CD8-positive, alpha-beta T cell (primary cell): ENCODE measurements at regions of chr10 and their contacts with region 1.

Region 1: DNA sequence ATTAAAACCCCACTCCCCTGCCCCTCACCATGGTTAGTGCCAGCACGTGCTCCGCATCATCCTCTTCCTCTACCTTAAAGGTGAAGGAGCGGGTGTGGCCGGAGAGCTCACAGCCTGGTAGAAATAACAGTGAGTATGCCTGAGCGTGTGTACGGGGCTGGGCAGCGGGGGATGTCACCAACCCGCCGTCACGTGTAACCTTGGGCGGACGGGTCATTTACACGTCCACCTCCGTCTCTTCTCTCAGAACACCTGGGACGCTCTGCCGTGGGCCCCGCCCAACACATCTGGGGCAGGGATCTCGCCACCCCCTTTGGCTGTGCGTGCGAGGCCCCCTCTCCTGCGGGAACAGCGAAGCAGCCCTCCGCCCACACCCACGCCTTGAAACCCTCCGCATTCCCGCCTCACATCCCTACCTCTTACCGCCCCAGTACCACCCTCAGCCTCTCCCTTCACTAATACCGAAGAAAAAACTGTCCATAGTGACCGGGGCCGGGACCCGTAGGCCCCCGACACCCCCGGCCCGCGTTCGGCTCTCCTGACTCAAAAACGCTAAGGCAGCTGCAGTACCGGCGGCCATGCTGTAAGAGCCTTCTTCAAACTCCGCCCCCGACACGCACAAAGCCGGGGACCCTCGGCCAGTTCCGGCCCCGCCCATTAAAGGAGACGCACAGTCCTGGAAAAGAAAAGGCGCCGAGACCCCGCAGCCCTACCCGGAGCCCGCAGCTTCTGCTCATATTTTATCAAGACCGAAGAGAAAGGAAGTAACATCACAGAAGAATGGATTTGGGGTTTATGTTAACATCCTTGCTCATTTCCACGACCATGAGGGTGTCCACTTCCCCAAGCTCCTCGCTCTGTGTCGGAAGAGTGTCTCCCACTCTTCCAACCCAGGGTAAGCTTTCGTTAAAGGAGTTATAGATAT is at the start of gene NPM3:
- DNase-seq: peak; percentile 54 to 88 (median 83)
- ATAC-seq: peak; percentile 80
- H3K4me3 ChIP-seq: peak within 1 kb of the TSS; percentile 81 to 87
- H3K4me3 Mint-ChIP-seq: peak within 1 kb of the TSS; percentile 100
- H3K27ac ChIP-seq: peak within 1 kb of the TSS; percentile 64 to 81
- H3K27ac Mint-ChIP-seq: peak within 1 kb of the TSS; percentile 97
- H3K4me1 ChIP-seq: peaks cover 53% of the 10 kb centered on the region
- H3K4me1 Mint-ChIP-seq: peaks cover 71% of the 10 kb centered on the region
- H3K27me3 ChIP-seq: peaks cover 13 to 20% of the 10 kb centered on the region in 2 experiments
- H3K27me3 Mint-ChIP-seq: peaks cover 6% of the 10 kb centered on the region
- CTCF ChIP-seq: no peak
- total RNA-seq, gene NPM3: 21.1 to 25.1 TPM

Region 2: GRCh38 chr10:101536800-101537199 is 246.3 kb before region 1 on chr10:
- CTCF ChIA-PET with region 1: no interaction called
- POLR2A ChIA-PET with region 1: no interaction called
- intact Hi-C with region 1: loop called in 1 of 2 experiments (anchors 5 kb)
- DNase-seq: peak in 2 of 9 experiments; percentile 44 to 54
- ATAC-seq: peak; percentile 34
- H3K4me3 ChIP-seq: no peak overlapping the region
- H3K4me3 Mint-ChIP-seq: no peak overlapping the region
- H3K27ac ChIP-seq: no peak overlapping the region
- H3K27ac Mint-ChIP-seq: no peak overlapping the region
- H3K4me1 ChIP-seq: no peaks in the 10 kb centered on the region
- H3K4me1 Mint-ChIP-seq: no peaks in the 10 kb centered on the region
- H3K27me3 ChIP-seq: no peaks in the 10 kb centered on the region
- H3K27me3 Mint-ChIP-seq: no peaks in the 10 kb centered on the region
- CTCF ChIP-seq: peak; percentile 43

Region 3: GRCh38 chr10:101693978-101694673 is 88.9 kb before region 1 on chr10:
- CTCF ChIA-PET with region 1: interaction called, 3 read pairs
- POLR2A ChIA-PET with region 1: interaction called, 3 read pairs
- intact Hi-C with region 1: loop called (anchors 5 kb)
- DNase-seq: peak; percentile 42 to 83 (median 70)
- ATAC-seq: peak; percentile 66
- H3K4me3 ChIP-seq: peak overlapping the region; percentile 85 to 88
- H3K4me3 Mint-ChIP-seq: peak overlapping the region; percentile 97
- H3K27ac ChIP-seq: peak overlapping the region; percentile 97 to 99
- H3K27ac Mint-ChIP-seq: peak overlapping the region; percentile 99
- H3K4me1 ChIP-seq: peaks cover 36% of the 10 kb centered on the region
- H3K4me1 Mint-ChIP-seq: peaks cover 48% of the 10 kb centered on the region
- H3K27me3 ChIP-seq: no peaks in the 10 kb centered on the region
- H3K27me3 Mint-ChIP-seq: no peaks in the 10 kb centered on the region
- CTCF ChIP-seq: no peak

Region 4: DNA sequence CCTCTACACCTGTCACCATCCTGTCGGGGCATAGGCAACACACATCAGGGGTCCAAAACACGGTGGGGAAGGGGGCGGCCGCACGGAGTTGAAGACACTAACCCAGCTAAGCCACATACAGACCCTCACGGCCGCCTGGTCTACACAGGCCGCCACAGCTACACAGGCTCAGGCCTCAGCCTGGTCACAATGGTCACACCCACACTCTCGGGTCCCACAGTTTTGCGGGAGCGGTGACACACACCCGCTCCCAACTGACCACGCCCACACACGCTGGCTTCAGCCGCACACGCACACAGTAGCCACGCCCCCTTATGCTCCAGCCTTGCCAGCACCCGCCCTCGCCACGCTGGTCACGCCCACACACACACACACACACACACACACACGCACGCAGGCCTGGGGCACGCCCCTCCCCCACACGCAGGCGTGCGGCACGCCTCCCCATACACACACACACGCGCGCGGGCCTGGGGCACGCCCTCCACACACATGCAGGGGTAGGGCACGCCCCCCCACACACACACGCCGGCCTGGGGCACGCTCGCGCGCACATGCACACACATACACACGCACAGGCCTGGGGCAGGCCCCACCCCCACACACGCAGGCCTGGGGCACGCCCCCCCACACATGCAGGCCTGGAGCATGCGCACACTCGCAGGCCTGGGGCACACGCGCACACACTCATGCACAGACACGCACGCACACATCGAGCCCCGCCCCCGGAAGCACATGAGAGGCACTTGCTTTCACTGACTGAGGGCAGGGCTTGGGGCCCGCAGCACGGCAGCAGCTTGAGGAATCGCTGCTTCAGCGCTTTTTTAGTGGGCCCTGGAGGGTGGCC is 47.5 kb after region 1 on chr10:
- CTCF ChIA-PET with region 1: interaction called, 14 read pairs
- POLR2A ChIA-PET with region 1: no interaction called
- intact Hi-C with region 1: loop called in 1 of 2 experiments (anchors 5 kb)
- DNase-seq: peak; percentile 84 to 98 (median 93)
- ATAC-seq: peak; percentile 74
- H3K4me3 ChIP-seq: peak overlapping the region; percentile 49 to 51
- H3K4me3 Mint-ChIP-seq: peak overlapping the region; percentile 87
- H3K27ac ChIP-seq: peak overlapping the region; percentile 66 to 84
- H3K27ac Mint-ChIP-seq: peak overlapping the region; percentile 97
- H3K4me1 ChIP-seq: peaks cover 40% of the 10 kb centered on the region
- H3K4me1 Mint-ChIP-seq: peaks cover 47% of the 10 kb centered on the region
- H3K27me3 ChIP-seq: no peaks in the 10 kb centered on the region
- H3K27me3 Mint-ChIP-seq: no peaks in the 10 kb centered on the region
- CTCF ChIP-seq: no peak

Region 5: GRCh38 chr10:101867931-101868330 is 84.9 kb after region 1 on chr10:
- CTCF ChIA-PET with region 1: no interaction called
- POLR2A ChIA-PET with region 1: no interaction called
- intact Hi-C with region 1: no loop called
- DNase-seq: no peak
- ATAC-seq: no peak
- H3K4me3 ChIP-seq: no peak overlapping the region
- H3K4me3 Mint-ChIP-seq: no peak overlapping the region
- H3K27ac ChIP-seq: no peak overlapping the region
- H3K27ac Mint-ChIP-seq: no peak overlapping the region
- H3K4me1 ChIP-seq: no peaks in the 10 kb centered on the region
- H3K4me1 Mint-ChIP-seq: no peaks in the 10 kb centered on the region
- H3K27me3 ChIP-seq: no peaks in the 10 kb centered on the region
- H3K27me3 Mint-ChIP-seq: no peaks in the 10 kb centered on the region
- CTCF ChIP-seq: no peak

Region 6: GRCh38 chr10:102055647-102056419 is 272.8 kb after region 1 on chr10 and contains the start of gene ARMH3:
- CTCF ChIA-PET with region 1: no interaction called
- POLR2A ChIA-PET with region 1: no interaction called
- intact Hi-C with region 1: loop called in 1 of 2 experiments (anchors 1 kb)
- DNase-seq: peak; percentile 75 to 95 (median 87)
- ATAC-seq: peak; percentile 93
- H3K4me3 ChIP-seq: peak within 1 kb of the TSS; percentile 93 to 94
- H3K4me3 Mint-ChIP-seq: peak within 1 kb of the TSS; percentile 97
- H3K27ac ChIP-seq: peak within 1 kb of the TSS; percentile 79 to 90
- H3K27ac Mint-ChIP-seq: peak within 1 kb of the TSS; percentile 95
- H3K4me1 ChIP-seq: peaks cover 40% of the 10 kb centered on the region
- H3K4me1 Mint-ChIP-seq: peaks cover 42% of the 10 kb centered on the region
- H3K27me3 ChIP-seq: no peaks in the 10 kb centered on the region
- H3K27me3 Mint-ChIP-seq: no peaks in the 10 kb centered on the region
- CTCF ChIP-seq: no peak
- total RNA-seq, gene ARMH3: 18.6 to 20.6 TPM